Activated CD4-positive, alpha-beta memory T cell treated with anti-CD3 and anti-CD28 coated beads, Interleukin-2, amount 10 ng/mL, durations not matched to agents 7 days and 5 days (primary cell): ENCODE measurements at regions of chrX and their contacts with region 1.

Region 1: DNA sequence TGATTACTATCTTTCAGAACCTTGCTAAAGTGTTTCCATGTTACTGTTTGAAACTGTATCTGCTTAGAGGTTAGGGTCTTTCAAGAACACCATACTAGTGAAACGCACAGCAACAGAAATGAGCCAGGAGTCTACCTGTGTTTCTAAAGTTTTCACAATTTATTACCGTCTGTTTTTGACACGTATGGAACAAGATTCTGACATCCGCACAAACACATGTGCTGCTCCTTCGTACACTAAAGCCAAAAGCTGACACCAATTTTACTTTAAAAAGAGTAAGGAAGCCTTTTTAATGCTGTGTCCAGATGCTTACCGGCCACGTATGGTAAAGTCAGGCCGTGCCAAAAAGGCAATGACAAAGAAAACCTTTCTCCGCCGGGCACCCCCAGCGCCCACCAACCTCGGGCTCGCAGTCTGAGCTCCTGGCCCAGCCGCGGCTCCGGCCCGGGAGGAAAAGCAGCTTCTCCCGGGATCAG is 532 bp downstream of the RPS4X start:
- DNase-seq: no peak
- H3K4me3 Mint-ChIP-seq: peak overlapping the region; percentile 82
- H3K27ac Mint-ChIP-seq: peak overlapping the region; percentile 83
- H3K4me1 Mint-ChIP-seq: peaks cover 48% of the 10 kb centered on the region
- H3K27me3 Mint-ChIP-seq: peaks cover 15% of the 10 kb centered on the region

Region 2: DNA sequence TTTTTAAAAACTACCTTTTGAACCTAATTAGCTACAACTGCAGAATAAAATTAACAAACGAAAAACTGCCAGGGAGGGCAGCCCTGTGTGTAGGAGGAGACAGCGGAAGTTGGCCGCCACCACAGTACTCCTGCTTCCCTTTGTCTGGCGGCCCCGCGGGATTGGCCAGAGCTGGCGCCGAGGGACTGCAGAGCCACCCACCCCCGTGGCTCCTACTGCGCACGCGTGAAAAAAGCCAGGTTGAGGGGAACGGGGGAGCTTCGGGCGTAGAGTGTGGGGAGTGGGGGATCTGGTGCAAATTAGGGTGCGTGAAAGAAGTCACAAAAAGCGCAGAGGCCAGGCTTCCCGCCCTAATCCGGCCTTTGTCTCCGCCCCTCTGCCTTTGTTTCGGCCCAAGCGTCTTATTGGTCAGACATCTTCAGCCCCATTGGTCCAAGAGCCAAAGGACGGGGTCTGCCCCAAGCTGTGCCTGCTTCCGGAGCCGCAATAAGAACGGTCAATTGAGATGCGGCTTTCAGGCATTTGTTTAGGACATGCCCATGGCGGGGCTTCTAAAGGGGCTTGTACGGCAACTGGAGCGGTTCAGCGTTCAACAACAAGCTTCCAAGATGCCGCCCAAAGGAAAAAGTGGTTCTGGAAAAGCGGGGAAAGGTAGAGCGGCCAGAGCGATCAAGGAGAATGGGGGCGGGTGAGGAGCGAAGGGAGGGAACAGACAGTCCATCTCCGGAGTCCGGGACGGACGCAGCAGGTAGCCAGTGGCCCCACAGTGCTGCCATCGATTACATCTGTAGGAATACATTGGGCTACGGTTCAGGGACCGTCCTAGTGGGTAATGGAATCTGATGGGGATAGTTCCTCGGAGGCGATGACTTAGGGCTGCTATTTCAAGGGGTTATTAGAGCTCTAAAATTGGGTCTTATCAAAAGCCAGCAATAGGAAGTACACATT is 95.1 kb before region 1 on chrX and contains the start of gene PIN4:
- CTCF ChIA-PET with region 1: interaction called, 9 read pairs
- POLR2A ChIA-PET with region 1: interaction called, 17 read pairs
- DNase-seq: peak; percentile 87
- H3K4me3 Mint-ChIP-seq: no peak within 1 kb of the TSS
- H3K27ac Mint-ChIP-seq: no peak within 1 kb of the TSS
- H3K4me1 Mint-ChIP-seq: peaks cover 16% of the 10 kb centered on the region
- H3K27me3 Mint-ChIP-seq: no peaks in the 10 kb centered on the region
- total RNA-seq, gene PIN4: 7.5 to 8.9 TPM

Region 3: GRCh38 chrX:72238721-72239475 is 37.6 kb before region 1 on chrX and contains the start of gene ERCC6L:
- CTCF ChIA-PET with region 1: interaction called, 21 read pairs
- POLR2A ChIA-PET with region 1: interaction called, 20 read pairs
- DNase-seq: peak; percentile 88
- H3K4me3 Mint-ChIP-seq: peak within 1 kb of the TSS; percentile 77
- H3K27ac Mint-ChIP-seq: peak within 1 kb of the TSS; percentile 52
- H3K4me1 Mint-ChIP-seq: peaks cover 24% of the 10 kb centered on the region
- H3K27me3 Mint-ChIP-seq: no peaks in the 10 kb centered on the region
- total RNA-seq, gene ERCC6L: 9.0 to 9.5 TPM

Region 4: DNA sequence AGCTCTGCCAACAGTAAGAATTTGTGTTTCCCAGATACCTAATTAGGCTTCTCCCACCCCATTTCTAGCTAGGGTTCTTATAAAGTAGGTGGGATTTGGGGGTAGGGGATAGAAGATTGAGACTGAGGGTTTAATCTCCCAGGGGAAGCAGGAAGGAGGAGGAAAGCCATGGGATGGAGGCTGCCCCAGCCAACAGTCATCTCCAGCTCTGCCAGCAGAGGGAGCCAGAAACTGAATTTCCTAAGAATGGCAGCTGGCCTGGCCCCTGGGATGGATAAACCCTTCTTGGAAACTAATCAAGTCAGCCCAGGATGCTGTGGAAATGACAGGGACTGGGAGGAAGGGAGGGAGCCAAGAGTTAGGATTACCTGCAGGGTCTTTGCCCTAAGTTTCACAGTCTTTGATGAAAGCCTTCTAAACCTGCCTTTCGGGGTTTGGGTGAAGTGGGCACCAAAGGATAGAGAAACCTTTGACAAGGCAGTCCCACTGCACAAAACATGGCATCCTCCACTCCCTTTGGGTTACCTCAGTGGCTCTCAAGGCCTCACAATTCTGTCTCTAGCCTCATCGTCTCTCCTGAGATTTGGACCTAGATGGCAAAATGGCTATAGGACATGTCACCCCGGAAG is 30.9 kb before region 1 on chrX:
- CTCF ChIA-PET with region 1: interaction called, 21 read pairs
- POLR2A ChIA-PET with region 1: interaction called, 9 read pairs
- DNase-seq: peak; percentile 39
- H3K4me3 Mint-ChIP-seq: no peak overlapping the region
- H3K27ac Mint-ChIP-seq: no peak overlapping the region
- H3K4me1 Mint-ChIP-seq: peaks cover 9% of the 10 kb centered on the region
- H3K27me3 Mint-ChIP-seq: no peaks in the 10 kb centered on the region

Region 5: GRCh38 chrX:72306851-72307645 is 30.5 kb after region 1 on chrX:
- CTCF ChIA-PET with region 1: interaction called, 4 read pairs
- POLR2A ChIA-PET with region 1: interaction called, 14 read pairs
- DNase-seq: peak; percentile 19
- H3K4me3 Mint-ChIP-seq: peak overlapping the region; percentile 63
- H3K27ac Mint-ChIP-seq: no peak overlapping the region
- H3K4me1 Mint-ChIP-seq: peaks cover 26% of the 10 kb centered on the region
- H3K27me3 Mint-ChIP-seq: peaks cover 61% of the 10 kb centered on the region

Region 6: GRCh38 chrX:72317139-72317538 is 40.6 kb after region 1 on chrX:
- CTCF ChIA-PET with region 1: no interaction called
- POLR2A ChIA-PET with region 1: no interaction called
- DNase-seq: no peak
- H3K4me3 Mint-ChIP-seq: no peak overlapping the region
- H3K27ac Mint-ChIP-seq: no peak overlapping the region
- H3K4me1 Mint-ChIP-seq: no peaks in the 10 kb centered on the region
- H3K27me3 Mint-ChIP-seq: no peaks in the 10 kb centered on the region